Esophagus muscularis mucosa (tissue), 4 donors: ENCODE measurements at regions of chr10 and their contacts with region 1.

Region 1: GRCh38 chr10:22003079-22003913 is at the start of gene DNAJC1:
- DNase-seq: peak; percentile 99
- H3K4me3 ChIP-seq: peak within 1 kb of the TSS; percentile 71 to 93 (median 80)
- H3K27ac ChIP-seq: peak within 1 kb of the TSS; percentile 93 to 99 (median 94)
- H3K4me1 ChIP-seq: peaks cover 0 to 33% (median 26%) of the 10 kb centered on the region in 4 donors
- H3K27me3 ChIP-seq: no peaks in the 10 kb centered on the region
- CTCF ChIP-seq: peak in 1 of 3 experiments; percentile 28
- EP300 ChIP-seq: no peak
- POLR2A ChIP-seq: peak; percentile 83
- total RNA-seq, gene DNAJC1: 46.5 to 70.6 (median 61.5) TPM

Region 2: DNA sequence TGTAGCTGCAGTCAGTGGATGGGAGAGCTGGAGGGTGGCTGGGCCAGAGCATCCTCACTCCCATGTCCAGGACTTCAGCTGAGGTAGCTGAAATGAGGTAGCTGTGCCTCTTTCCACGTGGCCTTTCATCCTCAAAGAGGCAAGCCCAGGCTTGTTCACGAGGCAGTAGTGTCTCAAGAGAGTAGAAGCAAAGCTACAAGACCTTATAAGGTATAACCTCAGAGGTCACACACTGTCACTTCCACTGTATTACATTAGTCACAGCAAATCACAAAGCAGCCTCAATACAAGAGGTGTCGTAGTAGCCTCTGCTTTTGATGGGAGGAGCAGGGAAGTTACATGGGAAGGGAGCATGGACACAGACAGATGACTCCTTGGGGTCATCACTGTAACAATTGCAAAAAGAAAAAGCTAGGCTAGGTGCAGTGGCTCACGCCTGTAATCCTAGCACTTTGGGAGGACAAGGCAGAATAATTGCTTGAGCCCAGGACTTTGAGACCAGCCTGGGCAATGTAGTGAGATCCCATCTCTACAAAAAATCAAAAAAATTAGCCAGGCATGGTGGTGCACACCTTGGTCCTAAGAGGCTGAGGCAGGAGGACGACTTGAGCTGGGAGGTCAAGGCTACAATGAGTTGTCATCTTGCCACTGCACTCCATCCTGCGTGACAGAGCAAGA is 575.4 kb before region 1 on chr10:
- intact Hi-C with region 1: no loop called
- DNase-seq: no peak
- H3K4me3 ChIP-seq: no peak overlapping the region
- H3K27ac ChIP-seq: no peak overlapping the region
- H3K4me1 ChIP-seq: no peaks in the 10 kb centered on the region
- H3K27me3 ChIP-seq: no peaks in the 10 kb centered on the region
- CTCF ChIP-seq: no peak
- EP300 ChIP-seq: no peak
- POLR2A ChIP-seq: no peak

Region 3: DNA sequence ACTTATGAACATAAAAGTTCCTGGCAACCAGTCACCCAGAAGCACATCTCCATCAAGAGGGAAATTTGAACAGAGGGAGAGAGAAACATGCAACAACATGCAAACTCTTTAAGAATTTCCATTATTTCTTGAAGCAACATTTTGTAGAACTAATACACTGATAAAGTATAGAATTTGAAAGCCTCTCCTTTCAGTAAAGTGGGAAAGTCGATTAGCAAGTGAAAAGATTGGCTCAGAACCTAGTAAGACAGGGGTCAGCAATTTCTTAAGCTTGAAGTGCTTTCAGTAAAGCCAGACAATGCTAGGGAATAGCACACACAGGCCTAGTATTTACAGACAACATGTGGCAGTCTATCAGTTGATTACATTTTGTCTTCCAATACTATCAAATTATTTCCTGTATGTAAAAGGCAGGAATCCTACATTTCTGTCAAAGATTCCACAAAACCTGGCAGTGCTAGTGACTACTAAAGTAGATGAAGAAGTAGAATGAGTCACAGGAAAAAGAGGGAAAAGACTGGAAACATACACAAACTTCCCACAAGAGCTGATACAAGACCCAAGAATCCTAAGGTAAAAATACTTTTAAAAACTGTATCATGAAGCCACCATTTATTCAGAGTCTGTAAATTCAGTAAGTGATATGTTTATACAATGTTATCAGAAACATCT is 25.0 kb before region 1 on chr10:
- intact Hi-C with region 1: no loop called
- DNase-seq: no peak
- H3K4me3 ChIP-seq: no peak overlapping the region
- H3K27ac ChIP-seq: no peak overlapping the region
- H3K4me1 ChIP-seq: peaks cover 8 to 33% (median 19%) of the 10 kb centered on the region in 4 donors
- H3K27me3 ChIP-seq: no peaks in the 10 kb centered on the region
- CTCF ChIP-seq: no peak
- EP300 ChIP-seq: no peak
- POLR2A ChIP-seq: no peak

Region 4: DNA sequence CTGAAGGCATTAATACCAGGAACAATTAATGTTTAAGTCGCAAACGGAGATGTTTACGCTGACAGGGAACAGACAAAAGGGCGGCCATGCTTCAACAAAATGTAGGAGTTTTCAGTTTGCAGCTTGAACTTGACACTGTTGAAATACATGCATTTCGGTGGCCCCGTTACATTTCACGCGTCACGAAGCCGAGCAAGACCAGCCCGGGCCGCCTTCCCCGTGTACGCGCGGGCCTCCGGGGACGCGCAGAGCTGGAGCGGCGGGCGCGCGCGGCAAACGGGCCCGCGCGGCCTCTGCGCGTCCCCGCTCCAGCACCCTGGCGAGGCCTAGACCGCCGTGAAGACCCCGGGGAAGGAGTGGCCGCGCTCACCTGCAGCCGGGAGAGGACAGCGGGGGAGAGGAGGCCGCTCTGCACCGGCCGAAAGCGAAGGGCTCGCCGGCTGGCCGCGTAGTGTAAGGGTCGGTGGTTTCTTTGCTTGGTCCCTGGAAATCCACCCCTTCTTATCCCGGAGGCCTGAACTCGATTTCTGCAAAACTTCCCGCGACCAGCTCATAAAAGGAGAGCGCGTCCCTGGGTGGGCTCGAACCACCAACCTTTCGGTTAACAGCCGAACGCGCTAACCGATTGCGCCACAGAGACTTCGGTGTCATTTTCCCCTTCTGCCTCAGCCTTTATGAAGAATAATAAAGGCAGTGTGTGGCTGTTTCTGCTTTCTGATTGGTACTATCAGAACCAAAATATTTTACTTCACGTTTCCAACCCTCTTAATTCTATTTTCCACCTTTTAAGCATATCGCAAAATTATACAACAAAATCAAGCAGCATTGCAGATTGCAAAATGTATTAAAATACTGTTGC is 225.9 kb after region 1 on chr10:
- intact Hi-C with region 1: loop called (anchors 5 kb)
- DNase-seq: peak; percentile 97
- H3K4me3 ChIP-seq: peak overlapping the region; percentile 67 to 76 (median 70)
- H3K27ac ChIP-seq: peak overlapping the region; percentile 90 to 96 (median 92)
- H3K4me1 ChIP-seq: peaks cover 3 to 10% (median 8%) of the 10 kb centered on the region in 4 donors
- H3K27me3 ChIP-seq: no peaks in the 10 kb centered on the region
- CTCF ChIP-seq: no peak
- EP300 ChIP-seq: no peak
- POLR2A ChIP-seq: no peak

Region 5: GRCh38 chr10:22251751-22252223 is 248.5 kb after region 1 on chr10:
- intact Hi-C with region 1: loop called (anchors 10 kb)
- DNase-seq: peak; percentile 94
- H3K4me3 ChIP-seq: peak overlapping the region; percentile 80 to 87 (median 84)
- H3K27ac ChIP-seq: peak overlapping the region; percentile 90 to 97 (median 96)
- H3K4me1 ChIP-seq: peaks cover 0 to 19% (median 10%) of the 10 kb centered on the region in 4 donors
- H3K27me3 ChIP-seq: no peaks in the 10 kb centered on the region
- CTCF ChIP-seq: no peak
- EP300 ChIP-seq: no peak
- POLR2A ChIP-seq: no peak